ENCODE measurements at regions of chr17 and their contacts with region 1.

Region 1: GRCh38 chr17:29148790-29149430 is 31.3 kb downstream of the MYO18A start:
- DNase-seq: peak; percentile 96
- ATAC-seq: peak; percentile 96
- H3K4me3 ChIP-seq: peak overlapping the region; percentile 23 to 65 (median 49)
- H3K4me3 Mint-ChIP-seq: peak overlapping the region; percentile 88
- H3K27ac ChIP-seq: peak overlapping the region; percentile 85 to 88
- H3K27ac Mint-ChIP-seq: peak overlapping the region; percentile 93
- H3K4me1 ChIP-seq: peaks cover 34 to 39% of the 10 kb centered on the region in 2 donors
- H3K4me1 Mint-ChIP-seq: peaks cover 46% of the 10 kb centered on the region
- H3K27me3 ChIP-seq: no peaks in the 10 kb centered on the region
- H3K27me3 Mint-ChIP-seq: no peaks in the 10 kb centered on the region
- CTCF ChIP-seq: peak; percentile 96

Region 2: DNA sequence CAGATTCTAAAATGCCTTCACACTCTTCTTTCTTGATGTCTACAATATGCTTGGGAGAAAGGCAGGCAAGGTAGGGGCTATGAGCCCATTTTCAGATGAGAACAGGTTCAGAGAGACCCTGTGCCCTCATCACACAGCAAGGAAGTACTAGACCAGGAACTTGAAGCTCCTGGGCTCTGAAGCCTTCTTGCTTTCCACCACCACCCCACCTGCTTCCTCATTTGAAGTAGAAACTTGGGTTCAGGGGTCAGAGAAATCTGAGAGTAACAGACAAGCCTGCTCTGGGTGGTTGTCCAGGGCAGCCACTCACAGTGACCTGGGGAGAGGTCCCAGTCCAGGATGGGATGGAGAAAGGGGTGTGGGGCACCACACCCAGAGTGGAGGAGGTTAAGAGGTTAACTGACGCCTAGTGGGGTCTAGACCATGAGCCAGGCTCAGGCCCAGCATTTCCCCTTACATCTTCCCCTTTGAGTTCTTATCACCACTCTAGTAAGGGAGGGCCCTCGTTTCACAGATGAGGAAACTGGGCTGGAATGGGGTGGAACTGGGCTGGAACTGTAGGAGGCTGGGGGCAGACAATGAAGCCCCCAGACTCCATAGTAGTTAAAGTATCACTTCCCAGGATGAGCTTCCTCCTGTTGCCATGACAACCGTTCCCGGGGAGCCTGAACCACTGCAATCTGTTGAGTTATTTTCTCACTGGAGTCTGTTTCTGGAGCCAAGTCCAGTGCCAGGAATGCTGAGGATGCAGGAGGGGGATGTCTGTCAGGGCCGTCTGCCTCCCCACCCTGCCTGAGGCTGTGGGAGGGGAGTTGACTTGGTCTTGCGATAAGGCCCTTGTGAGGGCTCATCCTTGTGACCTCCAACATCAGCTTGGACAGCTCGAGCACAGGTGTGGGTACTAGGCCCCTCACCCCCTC is 181.4 kb before region 1 on chr17:
- CTCF ChIA-PET with region 1: interaction called, 14 read pairs
- POLR2A ChIA-PET with region 1: no interaction called
- intact Hi-C with region 1: no loop called
- DNase-seq: peak; percentile 50
- ATAC-seq: peak; percentile 21
- H3K4me3 ChIP-seq: no peak overlapping the region
- H3K4me3 Mint-ChIP-seq: no peak overlapping the region
- H3K27ac ChIP-seq: peak overlapping the region in 1 of 2 donors; percentile 40
- H3K27ac Mint-ChIP-seq: peak overlapping the region; percentile 66
- H3K4me1 ChIP-seq: peaks cover 4 to 17% of the 10 kb centered on the region in 2 donors
- H3K4me1 Mint-ChIP-seq: peaks cover 9% of the 10 kb centered on the region
- H3K27me3 ChIP-seq: peaks cover 0 to 15% (median 2%) of the 10 kb centered on the region in 4 experiments
- H3K27me3 Mint-ChIP-seq: peaks cover 13% of the 10 kb centered on the region
- CTCF ChIP-seq: no peak

Region 3: DNA sequence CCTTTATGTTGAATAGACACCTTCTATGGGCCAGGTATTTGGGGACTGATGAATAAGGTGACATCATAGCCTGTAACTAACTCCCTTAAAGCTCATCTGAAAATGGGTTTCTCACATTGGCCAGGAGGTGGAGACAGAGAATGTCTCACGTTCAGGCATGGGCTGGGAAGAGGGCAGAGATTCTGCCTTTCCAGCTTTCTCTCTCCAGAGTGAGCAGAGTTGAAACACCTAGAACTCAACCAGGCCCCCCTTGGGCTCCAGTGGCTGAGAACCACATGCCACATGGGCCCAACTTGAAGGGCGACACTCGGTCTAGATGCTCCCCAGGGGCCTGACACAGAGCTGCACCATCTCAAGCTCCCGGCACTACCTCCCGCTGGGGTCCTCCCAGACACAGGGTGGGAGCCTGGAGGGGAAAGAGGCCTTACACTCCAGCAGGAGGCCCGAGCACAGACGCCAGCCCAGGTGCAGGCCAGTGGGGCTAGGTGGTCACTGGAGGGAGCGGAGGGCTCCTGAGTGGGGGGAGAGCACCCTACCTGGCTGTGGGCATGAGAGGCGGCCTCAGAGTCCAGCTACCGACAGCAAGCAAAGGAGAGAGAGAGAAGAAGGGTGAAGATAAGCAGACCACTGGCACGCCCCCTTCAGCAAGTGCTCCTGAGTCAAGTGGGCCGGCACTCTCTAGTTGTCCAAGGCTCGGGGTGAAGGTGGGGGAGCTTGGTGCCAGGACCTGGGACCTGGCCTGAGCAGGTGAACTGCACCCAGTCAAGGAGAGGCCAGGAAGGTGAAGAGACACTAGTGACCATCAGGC is 24.6 kb before region 1 on chr17:
- CTCF ChIA-PET with region 1: interaction called, 120 read pairs
- POLR2A ChIA-PET with region 1: interaction called, 5 read pairs
- intact Hi-C with region 1: no loop called
- DNase-seq: peak; percentile 63
- ATAC-seq: peak; percentile 84
- H3K4me3 ChIP-seq: no peak overlapping the region
- H3K4me3 Mint-ChIP-seq: no peak overlapping the region
- H3K27ac ChIP-seq: no peak overlapping the region
- H3K27ac Mint-ChIP-seq: peak overlapping the region; percentile 7
- H3K4me1 ChIP-seq: peaks cover 0 to 4% of the 10 kb centered on the region in 2 donors
- H3K4me1 Mint-ChIP-seq: no peaks in the 10 kb centered on the region
- H3K27me3 ChIP-seq: no peaks in the 10 kb centered on the region
- H3K27me3 Mint-ChIP-seq: no peaks in the 10 kb centered on the region
- CTCF ChIP-seq: peak; percentile 60

Region 4: GRCh38 chr17:29180034-29180787 is 31.3 kb after region 1 on chr17 and contains the start of gene MYO18A:
- CTCF ChIA-PET with region 1: interaction called, 225 read pairs
- POLR2A ChIA-PET with region 1: interaction called, 9 read pairs
- intact Hi-C with region 1: loop called (anchors 1 kb)
- DNase-seq: peak; percentile 87
- ATAC-seq: peak; percentile 97
- H3K4me3 ChIP-seq: peak within 1 kb of the TSS in 3 of 5 experiments; percentile 33 to 46 (median 44)
- H3K4me3 Mint-ChIP-seq: peak within 1 kb of the TSS; percentile 69
- H3K27ac ChIP-seq: no peak within 1 kb of the TSS
- H3K27ac Mint-ChIP-seq: no peak within 1 kb of the TSS
- H3K4me1 ChIP-seq: peaks cover 9 to 28% of the 10 kb centered on the region in 2 donors
- H3K4me1 Mint-ChIP-seq: peaks cover 16% of the 10 kb centered on the region
- H3K27me3 ChIP-seq: peaks cover 0 to 2% (median 0%) of the 10 kb centered on the region in 4 experiments
- H3K27me3 Mint-ChIP-seq: peaks cover 7% of the 10 kb centered on the region
- CTCF ChIP-seq: peak; percentile 81
- total RNA-seq, gene MYO18A: 155 and 169 TPM in 2 replicates

Region 5: GRCh38 chr17:29219378-29220047 is 70.6 kb after region 1 on chr17:
- CTCF ChIA-PET with region 1: interaction called, 304 read pairs
- POLR2A ChIA-PET with region 1: interaction called, 3 read pairs
- intact Hi-C with region 1: loop called (anchors 1 kb)
- DNase-seq: peak; percentile 82
- ATAC-seq: peak; percentile 91
- H3K4me3 ChIP-seq: no peak overlapping the region
- H3K4me3 Mint-ChIP-seq: no peak overlapping the region
- H3K27ac ChIP-seq: no peak overlapping the region
- H3K27ac Mint-ChIP-seq: no peak overlapping the region
- H3K4me1 ChIP-seq: peaks cover 5 to 7% of the 10 kb centered on the region in 2 donors
- H3K4me1 Mint-ChIP-seq: peaks cover 8% of the 10 kb centered on the region
- H3K27me3 ChIP-seq: no peaks in the 10 kb centered on the region
- H3K27me3 Mint-ChIP-seq: peaks cover 5% of the 10 kb centered on the region
- CTCF ChIP-seq: peak; percentile 99